ENCODE measurements at regions of chr6 and their contacts with region 1.

Region 1: DNA sequence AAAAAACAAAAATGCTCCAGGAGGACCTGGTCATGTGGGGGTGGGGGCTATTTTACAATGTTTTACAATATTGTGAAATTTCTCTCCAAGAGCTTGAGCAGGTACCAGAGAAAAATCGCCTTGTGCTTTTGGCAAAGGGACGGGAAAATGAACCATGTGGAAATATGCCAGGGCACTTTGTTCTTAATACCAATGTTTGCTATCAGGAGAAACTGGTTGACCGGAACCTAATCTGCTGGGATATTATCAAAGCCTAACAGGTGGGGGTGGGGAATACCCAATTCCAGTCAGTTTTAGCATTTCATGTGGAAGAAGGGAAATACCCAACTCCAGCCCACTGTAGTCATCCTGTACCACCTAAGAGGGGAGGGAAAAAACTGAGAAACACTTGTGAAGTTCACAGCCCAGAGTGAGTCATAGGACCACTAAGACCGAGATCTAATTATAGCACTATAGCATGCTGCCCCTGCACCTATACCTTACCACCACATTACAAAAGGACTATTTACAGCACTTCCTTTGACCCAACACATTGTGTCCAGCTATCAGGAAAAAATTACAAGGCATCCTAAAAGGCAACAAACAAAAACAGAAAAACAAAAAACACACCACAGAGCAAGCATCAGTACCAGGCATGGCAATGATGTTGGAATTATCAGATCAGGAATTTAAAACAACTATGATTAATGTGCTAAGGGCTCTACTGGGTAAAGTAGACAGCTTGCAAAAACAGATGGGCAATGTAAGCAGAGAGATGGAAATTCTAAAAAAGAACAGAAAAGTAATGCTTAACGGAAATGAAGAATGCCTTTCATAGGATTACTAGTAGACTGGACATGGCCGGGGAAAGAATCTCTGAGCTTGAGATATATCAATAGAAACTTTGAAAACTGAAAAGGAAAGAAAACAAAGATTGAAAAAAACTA is 84.1 kb upstream of the POPDC3 start:
- DNase-seq: no peak
- ATAC-seq: no peak
- H3K4me3 ChIP-seq: no peak overlapping the region
- H3K27ac ChIP-seq: no peak overlapping the region
- H3K4me1 ChIP-seq: peaks cover 5 to 11% of the 10 kb centered on the region in 2 donors
- H3K27me3 ChIP-seq: no peaks in the 10 kb centered on the region
- CTCF ChIP-seq: no peak
- POLR2A ChIP-seq: no peak

Region 2: DNA sequence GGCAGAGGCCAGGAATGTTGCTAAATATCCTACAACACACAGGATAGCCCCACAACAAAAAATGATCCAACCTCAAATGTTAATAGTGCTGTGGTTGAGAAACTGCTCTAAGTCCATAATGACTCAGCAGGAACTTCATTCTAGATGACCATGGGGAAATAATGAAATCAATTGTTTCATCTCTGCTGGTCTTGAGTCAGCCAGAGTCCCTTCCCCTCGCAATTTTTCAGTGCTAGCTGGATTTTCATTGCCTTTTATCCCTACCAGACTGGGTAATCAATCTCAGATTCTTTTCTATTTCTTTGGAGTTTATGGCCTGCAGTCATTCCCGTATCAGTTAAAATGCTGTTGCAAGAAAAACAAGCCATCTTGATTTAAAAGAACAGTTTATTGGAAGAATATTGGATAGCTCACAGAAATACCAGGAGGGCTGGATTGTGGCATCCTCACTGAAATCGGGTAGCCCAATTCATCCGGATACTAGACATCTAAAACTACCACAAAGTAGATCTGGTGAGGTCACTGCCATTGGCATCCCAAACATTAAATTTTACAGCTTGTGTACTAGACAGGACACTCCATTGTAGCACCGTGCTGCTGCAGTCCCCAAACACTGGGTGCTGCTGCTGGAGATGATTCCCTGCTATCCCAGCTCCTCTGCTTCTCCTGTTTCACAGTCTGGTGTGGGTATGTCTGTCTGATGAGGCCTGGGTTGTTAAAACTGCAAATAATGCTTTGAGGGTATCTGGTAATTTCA is 53.8 kb before region 1 on chr6:
- in situ Hi-C with region 1: no loop called
- intact Hi-C with region 1: loop called (anchors 10 kb)
- DNase-seq: no peak
- ATAC-seq: peak; percentile 47 to 69
- H3K4me3 ChIP-seq: no peak overlapping the region
- H3K27ac ChIP-seq: peak overlapping the region; percentile 32 to 68 (median 52)
- H3K4me1 ChIP-seq: peaks cover 11 to 18% of the 10 kb centered on the region in 2 donors
- H3K27me3 ChIP-seq: no peaks in the 10 kb centered on the region
- CTCF ChIP-seq: no peak
- POLR2A ChIP-seq: no peak

Measured in gastrocnemius medialis (tissue), 4 donors.